ENCODE measurements at regions of chr3 and their contacts with region 1.

Region 1: DNA sequence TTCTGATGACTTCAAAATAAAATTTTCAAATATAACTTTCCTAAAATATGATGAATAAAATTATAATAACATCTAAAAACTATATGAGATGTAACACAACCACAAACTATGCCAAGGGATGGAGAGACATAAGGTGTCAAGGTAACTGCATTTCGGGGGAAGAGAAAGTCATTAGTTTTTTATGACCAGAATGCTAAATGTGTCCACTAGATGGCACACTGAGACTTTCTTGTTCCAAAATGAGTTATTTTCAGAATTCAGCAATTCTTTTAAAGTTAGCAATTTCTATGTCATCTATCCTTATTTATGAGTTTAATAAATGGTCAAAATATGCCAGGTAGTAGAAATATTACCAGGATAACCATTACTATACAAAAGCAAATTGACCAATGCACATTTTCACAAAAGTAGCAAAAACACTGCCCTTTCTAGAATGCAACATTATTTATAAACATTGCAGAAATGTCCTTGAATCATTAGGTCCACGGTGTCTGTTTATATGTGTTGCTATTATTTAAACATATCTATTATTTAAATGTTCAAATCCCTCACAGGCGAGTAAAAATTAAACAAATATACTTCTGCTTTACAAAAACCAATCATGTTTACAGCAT is 374.2 kb downstream of the PLCL2 start:
- DNase-seq: peak; percentile 63
- CTCF ChIP-seq: peak; percentile 58

Region 2: DNA sequence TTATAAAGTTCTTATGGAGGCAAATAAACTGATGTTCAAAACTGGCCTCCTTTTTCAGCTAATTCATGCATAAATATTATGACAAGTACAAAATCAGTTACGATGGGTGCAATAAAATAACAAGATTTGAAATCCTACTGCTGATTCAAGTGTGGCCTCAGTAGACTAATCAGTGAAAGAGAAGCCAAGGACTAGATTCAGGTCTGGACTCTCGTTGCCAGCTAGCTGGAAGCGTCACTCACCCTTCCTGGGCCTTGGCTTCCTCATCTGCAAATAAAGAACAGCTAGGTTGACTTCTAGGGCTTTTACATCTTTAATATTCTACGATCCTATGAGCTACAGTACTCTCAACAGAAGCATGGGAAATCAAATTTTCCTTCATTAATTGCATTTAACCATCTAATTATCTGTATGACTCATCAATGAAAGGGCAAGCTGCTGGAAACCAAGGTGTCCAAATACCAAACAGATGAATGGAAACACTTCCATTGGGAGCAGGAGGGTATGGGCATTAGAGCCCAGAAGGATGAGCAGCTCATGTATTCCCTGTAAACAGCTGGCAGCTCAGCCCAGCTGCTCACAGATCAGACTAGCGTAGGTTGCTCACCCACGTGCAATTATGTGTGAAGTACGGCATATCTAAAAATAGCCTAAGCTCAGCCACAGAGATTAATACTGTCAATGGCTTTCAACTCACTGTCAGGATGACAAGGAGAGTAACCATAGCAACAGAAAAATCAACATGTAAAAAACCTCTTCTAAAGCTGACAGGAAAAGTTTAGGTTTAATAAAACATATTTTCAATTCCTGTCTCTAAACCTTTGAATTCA is 79.3 kb before region 1 on chr3:
- in situ Hi-C with region 1: no loop called
- DNase-seq: peak; percentile 65
- CTCF ChIP-seq: no peak

Region 3: GRCh38 chr3:17407576-17407975 is 148.6 kb after region 1 on chr3:
- in situ Hi-C with region 1: loop called (anchors 10 kb)
- DNase-seq: no peak
- CTCF ChIP-seq: no peak

Region 4: DNA sequence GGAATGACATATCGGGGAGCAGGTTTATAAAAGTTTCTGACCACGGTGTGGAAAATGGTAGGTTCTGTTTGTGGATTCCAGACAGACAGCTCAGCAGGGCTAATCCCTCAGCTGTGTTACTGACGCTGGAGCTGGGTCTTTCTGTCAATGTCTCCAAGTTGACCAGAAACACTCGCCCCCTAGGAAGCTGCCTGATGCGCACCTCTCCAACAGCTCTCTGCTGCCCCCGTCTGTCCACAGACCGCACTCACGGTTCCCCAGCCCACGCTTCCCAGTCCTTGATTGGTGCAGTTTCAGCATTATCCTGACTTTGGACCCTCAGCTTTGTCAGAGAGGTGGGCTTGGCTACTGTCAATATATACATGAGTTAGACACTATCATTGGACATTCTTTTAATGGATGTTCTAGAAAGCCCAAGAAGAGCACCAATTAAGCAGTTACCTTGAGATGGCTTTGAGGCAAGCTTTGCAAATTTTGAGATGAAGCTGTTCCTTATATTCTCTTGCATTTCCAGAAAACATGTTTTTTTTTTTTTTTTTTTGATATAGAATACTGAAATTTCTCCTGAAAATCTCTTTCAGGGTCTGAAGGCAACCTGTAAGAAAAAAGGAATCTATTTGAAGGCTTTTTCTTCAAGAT is 582.4 kb after region 1 on chr3:
- in situ Hi-C with region 1: loop called (anchors 25 kb)
- DNase-seq: peak; percentile 59
- CTCF ChIP-seq: peak; percentile 89